Breast epithelium (tissue), 4 donors: ENCODE measurements at regions of chr10 and their contacts with region 1.

Region 1: DNA sequence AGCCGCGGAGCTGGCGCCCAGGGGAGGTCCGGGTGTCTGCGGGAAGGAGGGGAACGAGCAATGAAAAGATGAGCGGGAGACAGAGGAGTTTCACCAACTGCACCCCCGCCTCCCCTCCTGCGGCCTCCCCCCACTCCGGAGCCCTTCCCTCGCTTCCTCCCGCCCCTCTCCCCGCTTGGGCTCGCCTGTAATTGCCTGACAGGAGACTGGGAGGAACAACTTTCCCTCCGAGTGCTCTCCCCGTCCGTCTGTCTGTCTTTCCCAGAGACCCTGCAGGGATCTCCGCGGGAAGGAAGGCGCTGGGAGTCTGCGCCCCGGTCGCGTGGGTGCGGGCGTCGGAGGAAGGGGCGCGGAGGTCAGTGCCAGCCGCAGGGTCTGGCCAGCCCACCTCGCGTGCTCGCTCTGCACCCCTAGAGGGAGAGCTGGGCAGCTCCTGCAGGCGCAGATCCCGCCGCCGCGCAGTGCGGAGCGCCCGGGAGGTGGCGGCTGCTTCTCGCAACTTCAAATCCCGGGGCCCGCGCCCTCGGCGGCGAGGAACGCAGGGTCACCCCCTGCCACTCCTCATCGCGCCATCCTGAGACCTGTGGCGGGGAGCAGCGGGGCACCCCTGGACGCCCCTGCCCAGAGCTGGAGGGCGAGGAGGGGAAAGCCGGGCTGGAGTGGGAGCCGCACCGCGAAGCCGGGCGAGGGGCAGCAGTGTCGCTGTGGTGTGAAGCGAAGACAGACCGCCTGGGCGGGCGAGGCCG is 511 bp upstream of the NRP1 start:
- DNase-seq: peak; percentile 49 to 61
- H3K4me3 ChIP-seq: peak overlapping the region; percentile 75 to 82 (median 75)
- H3K27ac ChIP-seq: peak overlapping the region; percentile 84 to 94
- H3K4me1 ChIP-seq: no peaks in the 10 kb centered on the region
- H3K27me3 ChIP-seq: no peaks in the 10 kb centered on the region
- CTCF ChIP-seq: peak; percentile 49 to 65 (median 53)
- POLR2A ChIP-seq: no peak

Region 2: GRCh38 chr10:31912898-31913852 is 1421.8 kb before region 1 on chr10:
- intact Hi-C with region 1: no loop called
- DNase-seq: no peak
- H3K4me3 ChIP-seq: peak overlapping the region in 1 of 3 donors; percentile 34
- H3K27ac ChIP-seq: peak overlapping the region; percentile 23 to 37
- H3K4me1 ChIP-seq: no peaks in the 10 kb centered on the region
- H3K27me3 ChIP-seq: no peaks in the 10 kb centered on the region
- CTCF ChIP-seq: no peak
- POLR2A ChIP-seq: no peak

Region 3: GRCh38 chr10:32548208-32548607 is 786.8 kb before region 1 on chr10:
- intact Hi-C with region 1: no loop called
- DNase-seq: no peak
- H3K4me3 ChIP-seq: no peak overlapping the region
- H3K27ac ChIP-seq: no peak overlapping the region
- H3K4me1 ChIP-seq: no peaks in the 10 kb centered on the region
- H3K27me3 ChIP-seq: no peaks in the 10 kb centered on the region
- CTCF ChIP-seq: no peak
- POLR2A ChIP-seq: no peak

Region 4: GRCh38 chr10:34739915-34740314 is 1404.9 kb after region 1 on chr10:
- intact Hi-C with region 1: loop called (anchors 5 kb)
- DNase-seq: peak in 1 of 2 donors; percentile 49
- H3K4me3 ChIP-seq: peak overlapping the region in 2 of 3 donors; percentile 21 to 40
- H3K27ac ChIP-seq: peak overlapping the region; percentile 67 to 68
- H3K4me1 ChIP-seq: peaks cover 0 to 6% of the 10 kb centered on the region in 2 donors
- H3K27me3 ChIP-seq: no peaks in the 10 kb centered on the region
- CTCF ChIP-seq: no peak
- POLR2A ChIP-seq: no peak